ENCODE measurements at regions of chr20 and their contacts with region 1.

Region 1: DNA sequence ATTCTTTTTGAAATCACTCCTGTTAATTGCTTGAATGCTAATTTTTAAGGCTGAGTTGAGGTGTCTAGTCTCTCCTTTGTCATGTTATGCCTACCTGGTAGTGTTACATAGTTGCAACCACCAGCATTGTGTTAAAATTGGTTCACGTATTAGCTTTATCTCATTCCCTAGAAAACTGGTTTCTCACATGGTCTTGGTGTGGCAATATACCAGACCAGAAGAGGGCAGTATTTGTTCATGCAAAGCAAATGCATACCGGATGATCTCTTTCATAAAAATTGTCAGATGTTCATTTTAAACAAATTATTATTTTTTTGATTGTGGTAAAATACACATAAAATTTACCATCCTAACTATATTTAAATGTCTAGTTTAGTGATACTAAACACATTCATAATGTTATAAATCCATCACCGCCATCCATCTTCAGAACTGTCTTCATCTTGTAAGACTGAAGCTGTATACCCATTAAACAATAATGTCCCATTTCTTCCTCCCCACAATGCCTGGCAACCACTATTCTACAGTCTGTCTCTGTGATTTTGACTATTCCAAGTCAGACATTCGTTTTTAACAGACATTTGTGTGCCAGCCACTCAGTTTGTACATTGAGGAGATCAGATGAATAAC is 92.8 kb downstream of the ATRN start:
- DNase-seq: peak in 2 of 9 experiments; percentile 39 to 54
- ATAC-seq: no peak
- H3K4me3 ChIP-seq: no peak overlapping the region
- H3K4me3 Mint-ChIP-seq: no peak overlapping the region
- H3K27ac ChIP-seq: no peak overlapping the region
- H3K27ac Mint-ChIP-seq: no peak overlapping the region
- H3K4me1 ChIP-seq: no peaks in the 10 kb centered on the region
- H3K4me1 Mint-ChIP-seq: no peaks in the 10 kb centered on the region
- H3K27me3 ChIP-seq: no peaks in the 10 kb centered on the region
- H3K27me3 Mint-ChIP-seq: no peaks in the 10 kb centered on the region
- CTCF ChIP-seq: peak; percentile 56

Region 2: GRCh38 chr20:3515379-3516170 is 48.1 kb before region 1 on chr20:
- CTCF ChIA-PET with region 1: no interaction called
- POLR2A ChIA-PET with region 1: no interaction called
- intact Hi-C with region 1: no loop called
- DNase-seq: no peak
- ATAC-seq: no peak
- H3K4me3 ChIP-seq: no peak overlapping the region
- H3K4me3 Mint-ChIP-seq: no peak overlapping the region
- H3K27ac ChIP-seq: no peak overlapping the region
- H3K27ac Mint-ChIP-seq: no peak overlapping the region
- H3K4me1 ChIP-seq: no peaks in the 10 kb centered on the region
- H3K4me1 Mint-ChIP-seq: no peaks in the 10 kb centered on the region
- H3K27me3 ChIP-seq: no peaks in the 10 kb centered on the region
- H3K27me3 Mint-ChIP-seq: no peaks in the 10 kb centered on the region
- CTCF ChIP-seq: no peak

Region 3: DNA sequence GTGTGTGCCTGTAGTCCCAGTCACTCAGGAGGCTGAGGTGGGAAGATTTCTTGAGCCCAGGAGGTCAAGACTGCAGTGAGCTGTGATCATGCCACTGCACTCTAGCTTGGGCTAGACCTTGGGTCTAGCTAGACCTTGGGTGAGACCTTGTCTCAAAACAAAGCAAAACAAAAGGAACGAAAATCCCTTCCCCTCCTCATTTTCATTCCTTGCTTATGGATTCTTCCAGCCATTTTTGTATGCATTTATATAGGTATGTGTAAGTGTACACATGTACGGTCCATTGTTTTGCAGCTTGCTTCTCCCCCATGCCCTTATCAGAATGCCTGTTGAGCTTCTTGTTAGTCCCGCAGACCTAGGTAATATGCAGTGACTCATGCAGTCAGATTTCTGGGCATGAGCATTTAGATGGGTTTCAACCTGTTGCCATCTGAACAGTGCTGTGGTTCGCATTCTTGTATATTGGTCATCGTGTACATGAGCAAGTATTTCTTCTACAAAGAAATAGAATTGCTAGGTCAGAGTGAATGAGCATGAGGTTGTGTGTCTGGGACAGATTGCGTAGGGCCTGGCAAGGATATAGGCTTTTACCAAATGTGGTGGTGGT is 19.7 kb before region 1 on chr20:
- CTCF ChIA-PET with region 1: no interaction called
- POLR2A ChIA-PET with region 1: no interaction called
- intact Hi-C with region 1: no loop called
- DNase-seq: no peak
- ATAC-seq: no peak
- H3K4me3 ChIP-seq: no peak overlapping the region
- H3K4me3 Mint-ChIP-seq: no peak overlapping the region
- H3K27ac ChIP-seq: no peak overlapping the region
- H3K27ac Mint-ChIP-seq: no peak overlapping the region
- H3K4me1 ChIP-seq: no peaks in the 10 kb centered on the region
- H3K4me1 Mint-ChIP-seq: no peaks in the 10 kb centered on the region
- H3K27me3 ChIP-seq: no peaks in the 10 kb centered on the region
- H3K27me3 Mint-ChIP-seq: no peaks in the 10 kb centered on the region
- CTCF ChIP-seq: no peak

Region 4: DNA sequence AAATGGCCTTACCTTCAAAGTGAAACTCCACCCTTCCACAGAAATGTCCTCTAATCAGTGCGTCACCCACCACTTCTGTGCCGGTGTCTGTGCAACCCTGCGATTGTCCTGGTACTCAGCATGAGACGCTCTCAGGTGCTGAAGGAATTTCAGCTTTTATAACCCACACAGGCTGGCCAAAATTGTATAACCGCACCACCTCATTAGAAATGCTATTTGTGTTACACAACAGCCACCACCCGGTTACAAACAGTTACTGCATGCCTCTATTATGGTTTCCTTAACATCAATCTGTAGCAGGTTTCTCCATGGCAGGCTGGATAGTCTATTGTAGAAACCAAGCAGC is 1386.1 kb after region 1 on chr20:
- CTCF ChIA-PET with region 1: no interaction called
- POLR2A ChIA-PET with region 1: no interaction called
- intact Hi-C with region 1: loop called in 1 of 2 experiments (anchors 5 kb)
- DNase-seq: peak in 3 of 9 experiments; percentile 11 to 45 (median 32)
- ATAC-seq: no peak
- H3K4me3 ChIP-seq: no peak overlapping the region
- H3K4me3 Mint-ChIP-seq: peak overlapping the region; percentile 13
- H3K27ac ChIP-seq: no peak overlapping the region
- H3K27ac Mint-ChIP-seq: no peak overlapping the region
- H3K4me1 ChIP-seq: no peaks in the 10 kb centered on the region
- H3K4me1 Mint-ChIP-seq: peaks cover 17% of the 10 kb centered on the region
- H3K27me3 ChIP-seq: no peaks in the 10 kb centered on the region
- H3K27me3 Mint-ChIP-seq: no peaks in the 10 kb centered on the region
- CTCF ChIP-seq: no peak